CD8-positive, alpha-beta T cell (primary cell): ENCODE measurements at regions of chr11 and their contacts with region 1.

Region 1: GRCh38 chr11:128630367-128631230 is 43.2 kb upstream of the ETS1 start:
- DNase-seq: peak; percentile 85 to 96 (median 93)
- ATAC-seq: peak; percentile 75
- H3K4me3 ChIP-seq: no peak overlapping the region
- H3K4me3 Mint-ChIP-seq: peak overlapping the region; percentile 61
- H3K27ac ChIP-seq: peak overlapping the region in 1 of 2 experiments; percentile 38
- H3K27ac Mint-ChIP-seq: peak overlapping the region; percentile 98
- H3K4me1 ChIP-seq: peaks cover 67% of the 10 kb centered on the region
- H3K4me1 Mint-ChIP-seq: peaks cover 65% of the 10 kb centered on the region
- H3K27me3 ChIP-seq: no peaks in the 10 kb centered on the region
- H3K27me3 Mint-ChIP-seq: no peaks in the 10 kb centered on the region
- CTCF ChIP-seq: peak; percentile 82

Region 2: DNA sequence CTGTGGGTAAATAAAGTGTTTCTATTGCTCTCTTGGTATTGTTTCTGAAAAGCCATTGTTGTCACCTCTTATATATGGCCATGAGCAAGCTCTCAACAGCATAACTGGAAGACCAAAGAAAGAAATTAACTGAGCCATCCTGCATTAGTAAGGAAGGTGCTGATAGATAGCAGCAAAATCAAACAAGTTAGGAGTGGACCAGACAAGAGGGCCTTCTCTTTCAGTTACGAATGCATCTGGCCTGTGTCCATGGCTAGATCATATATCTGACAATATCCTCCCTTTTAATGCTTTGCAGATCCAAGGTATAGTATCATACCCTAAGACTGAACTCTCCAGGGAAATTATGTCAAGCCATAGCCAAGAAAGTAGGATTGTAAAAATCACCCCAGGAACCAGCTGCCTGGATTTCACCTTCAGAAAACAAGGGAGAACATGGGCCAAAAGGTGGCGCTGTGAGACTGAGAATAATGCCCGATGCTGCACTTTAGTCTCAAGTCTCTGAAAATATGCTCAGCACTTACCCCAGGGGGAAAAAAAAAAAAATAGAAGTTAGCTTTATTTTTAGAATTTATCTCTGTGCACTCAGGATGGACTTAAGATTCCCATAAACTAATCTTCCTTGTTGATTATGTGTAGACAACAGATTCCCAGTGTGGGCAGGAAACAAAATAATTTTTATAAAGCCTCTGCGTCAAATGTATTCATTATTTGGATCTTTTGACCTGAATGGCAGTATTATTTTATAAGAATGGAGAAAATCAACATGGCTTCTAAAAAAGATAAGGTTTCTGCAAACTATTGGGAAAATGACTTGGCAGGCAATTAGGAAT is 458.3 kb before region 1 on chr11:
- CTCF ChIA-PET with region 1: interaction called, 263 read pairs
- POLR2A ChIA-PET with region 1: interaction called, 9 read pairs
- intact Hi-C with region 1: loop called (anchors 1 kb)
- DNase-seq: peak; percentile 76 to 91 (median 86)
- ATAC-seq: peak; percentile 89
- H3K4me3 ChIP-seq: no peak overlapping the region
- H3K4me3 Mint-ChIP-seq: no peak overlapping the region
- H3K27ac ChIP-seq: no peak overlapping the region
- H3K27ac Mint-ChIP-seq: no peak overlapping the region
- H3K4me1 ChIP-seq: no peaks in the 10 kb centered on the region
- H3K4me1 Mint-ChIP-seq: peaks cover 3% of the 10 kb centered on the region
- H3K27me3 ChIP-seq: no peaks in the 10 kb centered on the region
- H3K27me3 Mint-ChIP-seq: no peaks in the 10 kb centered on the region
- CTCF ChIP-seq: peak; percentile 88

Region 3: GRCh38 chr11:128323381-128323780 is 307.2 kb before region 1 on chr11:
- CTCF ChIA-PET with region 1: interaction called, 28 read pairs
- POLR2A ChIA-PET with region 1: interaction called, 5 read pairs
- intact Hi-C with region 1: no loop called
- DNase-seq: peak in 6 of 9 experiments; percentile 13 to 82 (median 60)
- ATAC-seq: no peak
- H3K4me3 ChIP-seq: no peak overlapping the region
- H3K4me3 Mint-ChIP-seq: peak overlapping the region; percentile 16
- H3K27ac ChIP-seq: peak overlapping the region; percentile 87 to 90
- H3K27ac Mint-ChIP-seq: peak overlapping the region; percentile 94
- H3K4me1 ChIP-seq: peaks cover 93% of the 10 kb centered on the region
- H3K4me1 Mint-ChIP-seq: peaks cover 85% of the 10 kb centered on the region
- H3K27me3 ChIP-seq: no peaks in the 10 kb centered on the region
- H3K27me3 Mint-ChIP-seq: no peaks in the 10 kb centered on the region
- CTCF ChIP-seq: peak; percentile 37

Region 4: GRCh38 chr11:128497061-128497775 is 133.4 kb before region 1 on chr11:
- CTCF ChIA-PET with region 1: interaction called, 140 read pairs
- POLR2A ChIA-PET with region 1: interaction called, 5 read pairs
- intact Hi-C with region 1: no loop called
- DNase-seq: peak in 2 of 9 experiments; percentile 51 to 64
- ATAC-seq: no peak
- H3K4me3 ChIP-seq: peak overlapping the region; percentile 24 to 43
- H3K4me3 Mint-ChIP-seq: peak overlapping the region; percentile 83
- H3K27ac ChIP-seq: peak overlapping the region; percentile 49 to 75
- H3K27ac Mint-ChIP-seq: peak overlapping the region; percentile 98
- H3K4me1 ChIP-seq: peaks cover 98% of the 10 kb centered on the region
- H3K4me1 Mint-ChIP-seq: peaks cover 96% of the 10 kb centered on the region
- H3K27me3 ChIP-seq: no peaks in the 10 kb centered on the region
- H3K27me3 Mint-ChIP-seq: no peaks in the 10 kb centered on the region
- CTCF ChIP-seq: no peak

Region 5: GRCh38 chr11:128603752-128604414 is 26.7 kb before region 1 on chr11:
- CTCF ChIA-PET with region 1: interaction called, 31 read pairs
- POLR2A ChIA-PET with region 1: interaction called, 6 read pairs
- intact Hi-C with region 1: loop called in 1 of 2 experiments (anchors 1 kb)
- DNase-seq: peak in 1 of 9 experiments; percentile 44
- ATAC-seq: no peak
- H3K4me3 ChIP-seq: no peak overlapping the region
- H3K4me3 Mint-ChIP-seq: no peak overlapping the region
- H3K27ac ChIP-seq: no peak overlapping the region
- H3K27ac Mint-ChIP-seq: no peak overlapping the region
- H3K4me1 ChIP-seq: peaks cover 32% of the 10 kb centered on the region
- H3K4me1 Mint-ChIP-seq: peaks cover 59% of the 10 kb centered on the region
- H3K27me3 ChIP-seq: no peaks in the 10 kb centered on the region
- H3K27me3 Mint-ChIP-seq: no peaks in the 10 kb centered on the region
- CTCF ChIP-seq: no peak

Region 6: DNA sequence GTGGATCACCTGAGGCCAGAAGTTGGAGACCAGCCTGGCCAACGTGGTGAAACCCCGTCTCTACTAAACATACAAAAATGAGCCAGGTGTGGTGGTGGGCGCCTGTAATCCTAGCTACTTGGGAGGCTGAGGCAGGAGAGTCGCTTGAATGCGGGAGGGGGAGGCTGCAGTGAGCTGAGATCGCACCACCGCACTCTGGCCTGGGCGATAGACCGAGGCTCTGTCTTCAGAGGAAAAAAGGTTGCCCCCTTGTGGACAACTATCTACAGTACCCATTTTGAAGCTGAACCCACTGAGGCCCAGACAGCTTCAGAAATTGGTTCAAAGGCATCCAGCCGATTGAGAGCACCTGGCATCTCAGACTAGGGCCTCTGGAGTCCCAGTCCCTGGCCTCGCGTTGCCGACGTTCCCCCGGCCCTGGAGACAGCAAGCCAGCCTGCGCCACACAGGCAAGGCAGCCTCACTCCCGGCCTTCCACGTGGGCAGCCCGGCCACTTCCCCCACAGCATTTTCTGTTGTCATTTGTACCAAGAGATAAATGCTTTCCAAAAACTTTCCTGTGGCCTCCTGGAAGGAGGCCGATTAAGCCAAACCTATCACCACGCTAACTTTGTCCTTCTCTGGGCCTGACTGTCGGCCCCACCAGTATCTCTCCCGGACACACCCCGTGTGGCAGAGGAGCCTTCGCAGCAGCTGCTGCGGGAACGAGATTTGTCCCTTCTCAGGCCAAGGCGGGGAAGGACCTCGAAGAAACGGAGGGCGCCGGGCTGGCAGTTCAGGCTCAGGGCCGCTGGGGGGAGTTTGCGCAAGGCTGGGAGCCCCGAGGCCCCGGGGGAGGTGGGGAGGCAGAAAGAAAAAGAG is 146.1 kb after region 1 on chr11:
- CTCF ChIA-PET with region 1: interaction called, 25 read pairs
- POLR2A ChIA-PET with region 1: no interaction called
- intact Hi-C with region 1: no loop called
- DNase-seq: peak in 6 of 9 experiments; percentile 27 to 79 (median 50)
- ATAC-seq: peak; percentile 57
- H3K4me3 ChIP-seq: no peak overlapping the region
- H3K4me3 Mint-ChIP-seq: no peak overlapping the region
- H3K27ac ChIP-seq: peak overlapping the region in 1 of 2 experiments; percentile 53
- H3K27ac Mint-ChIP-seq: peak overlapping the region; percentile 75
- H3K4me1 ChIP-seq: peaks cover 32% of the 10 kb centered on the region
- H3K4me1 Mint-ChIP-seq: peaks cover 71% of the 10 kb centered on the region
- H3K27me3 ChIP-seq: no peaks in the 10 kb centered on the region
- H3K27me3 Mint-ChIP-seq: no peaks in the 10 kb centered on the region
- CTCF ChIP-seq: peak; percentile 37

Region 7: DNA sequence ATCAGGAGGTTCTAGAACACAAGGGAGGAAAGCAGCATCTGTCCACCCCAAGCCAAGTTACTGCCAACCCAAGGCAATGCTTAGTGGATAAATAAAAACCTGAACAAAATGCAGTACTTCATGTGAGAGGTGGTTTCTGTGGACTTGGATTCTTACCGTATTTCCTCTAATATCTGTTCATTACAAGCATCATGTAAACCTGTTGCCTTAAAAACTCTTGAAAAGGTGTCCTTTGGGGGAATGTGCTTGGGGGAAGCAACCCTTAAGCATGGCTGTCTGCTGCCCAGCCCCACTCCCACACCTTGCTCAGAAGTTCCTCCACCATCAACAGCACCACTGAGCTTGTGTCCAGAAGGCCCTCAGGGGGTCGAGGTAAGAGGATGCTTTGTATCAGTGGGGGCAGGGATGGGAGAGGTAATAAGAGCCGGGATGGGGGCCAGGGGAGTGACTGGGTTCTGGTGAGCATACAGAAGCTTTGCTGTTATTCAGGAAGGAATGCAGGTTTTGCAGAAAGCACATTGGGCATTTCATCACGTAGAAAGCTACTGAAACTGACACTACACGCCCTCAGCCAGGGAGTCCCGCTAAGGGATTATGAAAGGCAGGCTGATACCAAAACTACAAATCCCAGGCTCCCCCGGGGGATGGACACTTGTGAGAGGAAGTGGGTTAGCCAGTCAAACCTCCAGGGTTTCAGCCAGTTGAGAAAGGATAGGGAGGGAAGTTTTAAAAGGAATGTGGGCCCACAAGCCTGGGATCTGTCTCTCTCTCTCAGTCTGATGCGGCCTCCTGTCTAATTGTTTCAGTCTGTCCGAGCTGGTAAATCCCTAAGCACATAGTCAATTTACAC is 184.5 kb after region 1 on chr11:
- CTCF ChIA-PET with region 1: no interaction called
- POLR2A ChIA-PET with region 1: no interaction called
- intact Hi-C with region 1: no loop called
- DNase-seq: no peak
- ATAC-seq: no peak
- H3K4me3 ChIP-seq: no peak overlapping the region
- H3K4me3 Mint-ChIP-seq: no peak overlapping the region
- H3K27ac ChIP-seq: no peak overlapping the region
- H3K27ac Mint-ChIP-seq: peak overlapping the region; percentile 11
- H3K4me1 ChIP-seq: no peaks in the 10 kb centered on the region
- H3K4me1 Mint-ChIP-seq: peaks cover 1% of the 10 kb centered on the region
- H3K27me3 ChIP-seq: no peaks in the 10 kb centered on the region
- H3K27me3 Mint-ChIP-seq: no peaks in the 10 kb centered on the region
- CTCF ChIP-seq: no peak